Prostate gland (tissue), 2 donors: ENCODE measurements at regions of chr3 and their contacts with region 1.

Region 1: GRCh38 chr3:16048435-16049318 is 125.8 kb upstream of the GALNT15 start:
- DNase-seq: peak; percentile 54
- H3K4me3 ChIP-seq: no peak overlapping the region
- H3K27ac ChIP-seq: no peak overlapping the region
- H3K4me1 ChIP-seq: no peaks in the 10 kb centered on the region
- H3K27me3 ChIP-seq: no peaks in the 10 kb centered on the region
- CTCF ChIP-seq: peak; percentile 51 to 83 (median 80)
- POLR2A ChIP-seq: no peak

Region 2: DNA sequence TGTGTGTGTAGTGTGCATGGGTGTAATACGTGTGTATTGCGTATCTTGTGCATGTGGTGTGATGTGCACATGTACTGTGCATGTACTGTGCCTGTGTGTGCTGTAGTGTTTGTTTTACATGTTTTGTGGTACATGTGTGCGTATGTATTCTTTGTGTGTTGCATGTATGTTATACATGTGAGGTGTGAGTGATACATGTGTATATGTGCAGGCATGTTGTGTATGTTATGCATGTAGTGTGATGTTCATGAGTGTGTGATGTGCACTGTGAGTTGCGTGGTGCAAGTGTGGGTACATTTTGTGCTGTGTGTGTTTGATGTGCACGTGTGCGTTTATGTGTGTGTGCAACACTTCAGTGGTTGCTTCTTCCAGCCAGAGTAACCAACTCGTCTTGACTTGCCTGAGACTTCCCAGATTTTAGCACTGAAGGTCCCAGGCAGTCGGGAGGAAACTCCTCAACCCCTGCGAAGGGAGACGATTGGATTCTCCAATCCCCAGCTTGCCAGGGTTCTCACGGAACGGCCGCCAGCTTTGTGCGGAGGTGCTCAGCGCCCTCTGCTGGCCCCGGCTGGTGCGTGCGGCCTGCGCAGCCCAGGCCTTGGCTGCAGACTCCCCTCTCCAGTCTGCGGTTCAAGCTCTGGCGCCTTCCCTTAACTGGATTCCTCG is 129.4 kb after region 1 on chr3:
- intact Hi-C with region 1: loop called (anchors 1 kb)
- DNase-seq: peak; percentile 61
- H3K4me3 ChIP-seq: no peak overlapping the region
- H3K27ac ChIP-seq: no peak overlapping the region
- H3K4me1 ChIP-seq: peaks cover 2% of the 10 kb centered on the region
- H3K27me3 ChIP-seq: no peaks in the 10 kb centered on the region
- CTCF ChIP-seq: peak; percentile 90 to 92 (median 92)
- POLR2A ChIP-seq: no peak

Region 3: DNA sequence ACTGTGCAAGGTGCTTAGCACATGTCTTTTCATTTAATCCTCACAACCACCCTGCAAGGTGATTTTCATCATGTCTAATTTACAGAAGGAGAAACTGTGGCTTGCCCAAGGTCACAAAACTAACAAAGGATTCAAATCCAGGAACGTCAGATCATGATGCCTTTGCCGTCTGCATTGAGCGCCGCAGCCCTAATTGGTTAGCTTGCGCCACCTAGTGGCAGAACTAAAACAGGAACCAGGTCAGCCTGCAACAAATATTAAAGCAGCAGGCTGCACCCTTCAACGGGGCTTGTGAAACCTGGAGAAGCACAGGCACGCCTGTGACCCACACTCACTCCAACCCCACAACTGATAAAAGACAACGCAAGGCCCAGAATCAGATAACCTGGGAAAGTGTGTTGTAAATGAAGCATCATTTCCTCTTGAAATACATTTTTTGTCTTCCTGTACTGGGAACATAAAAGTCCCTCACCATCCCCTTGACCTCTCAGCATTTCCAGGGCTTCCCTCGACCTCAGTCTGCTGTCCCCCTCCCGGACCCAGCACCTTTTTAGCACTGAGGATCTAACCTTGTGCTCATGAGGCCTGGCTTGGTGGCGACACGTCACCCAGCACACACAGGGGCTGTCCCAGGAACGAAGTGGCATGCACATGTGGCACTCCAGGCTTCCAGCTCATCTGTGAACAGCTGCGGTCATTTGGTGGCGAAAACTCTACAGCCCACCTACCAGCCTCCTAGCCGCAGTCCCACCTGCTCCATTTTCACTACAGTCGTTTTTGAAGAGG is 198.8 kb after region 1 on chr3:
- intact Hi-C with region 1: loop called (anchors 5 kb)
- DNase-seq: peak; percentile 76
- H3K4me3 ChIP-seq: no peak overlapping the region
- H3K27ac ChIP-seq: no peak overlapping the region
- H3K4me1 ChIP-seq: no peaks in the 10 kb centered on the region
- H3K27me3 ChIP-seq: no peaks in the 10 kb centered on the region
- CTCF ChIP-seq: peak; percentile 87 to 96 (median 90)
- POLR2A ChIP-seq: no peak